ENCODE measurements at regions of chr7 and their contacts with region 1.

Region 1: GRCh38 chr7:129611246-129612111 is at the start of gene NRF1:
- DNase-seq: peak; percentile 92 to 96
- ATAC-seq: peak; percentile 96 to 99 (median 97)
- H3K4me3 ChIP-seq: peak within 1 kb of the TSS; percentile 96
- H3K27ac ChIP-seq: peak within 1 kb of the TSS; percentile 97
- H3K4me1 ChIP-seq: peaks cover 27% of the 10 kb centered on the region
- H3K27me3 ChIP-seq: no peaks in the 10 kb centered on the region
- CTCF ChIP-seq: peak; percentile 23
- total RNA-seq, gene NRF1: 10.0 to 13.7 (median 10.7) TPM

Region 2: DNA sequence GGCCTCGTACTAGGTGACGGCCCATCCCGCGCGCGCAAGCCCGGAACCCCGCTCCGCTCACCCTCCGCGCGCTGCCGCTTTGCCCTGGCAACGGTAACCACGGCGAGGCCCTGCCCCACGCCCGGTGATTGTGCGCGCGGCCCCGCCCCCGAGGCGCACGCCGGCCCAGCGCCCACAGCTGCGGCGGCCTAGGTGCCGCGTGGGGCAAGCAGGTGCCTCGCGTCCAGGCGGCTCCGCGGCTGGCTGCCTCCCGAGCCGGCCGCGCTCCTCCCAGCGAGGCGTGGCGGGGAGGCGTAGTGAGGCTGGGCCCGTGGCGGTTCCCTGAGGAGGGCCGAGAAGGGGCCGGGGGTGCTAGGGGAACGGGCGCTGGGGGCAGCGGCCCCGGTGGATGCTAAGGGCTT is 109.1 kb before region 1 on chr7 and contains the start of gene SMKR1:
- intact Hi-C with region 1: loop called in 1 of 2 experiments (anchors 10 kb)
- DNase-seq: peak; percentile 71 to 88
- ATAC-seq: peak; percentile 88 to 92 (median 90)
- H3K4me3 ChIP-seq: peak within 1 kb of the TSS; percentile 76
- H3K27ac ChIP-seq: no peak within 1 kb of the TSS
- H3K4me1 ChIP-seq: peaks cover 7% of the 10 kb centered on the region
- H3K27me3 ChIP-seq: peaks cover 0 to 4% (median 0%) of the 10 kb centered on the region in 3 donors
- CTCF ChIP-seq: no peak
- total RNA-seq, gene SMKR1: 0.22 to 0.74 TPM in 2 of 4 donors, not detected in the others

Region 3: GRCh38 chr7:129906700-129907099 is 295.2 kb after region 1 on chr7:
- intact Hi-C with region 1: no loop called
- DNase-seq: no peak
- ATAC-seq: peak in 2 of 4 donors; percentile 39 to 48
- H3K4me3 ChIP-seq: no peak overlapping the region
- H3K27ac ChIP-seq: peak overlapping the region; percentile 38
- H3K4me1 ChIP-seq: peaks cover 73% of the 10 kb centered on the region
- H3K27me3 ChIP-seq: no peaks in the 10 kb centered on the region
- CTCF ChIP-seq: no peak

Measured in psoas muscle (tissue), 8 donors.